Posterior cingulate gyrus (tissue), 11 donors: ENCODE measurements at regions of chr2 and their contacts with region 1.

Region 1: GRCh38 chr2:196783431-196784094 is 15.9 kb downstream of the GTF3C3 start:
- DNase-seq: peak in 1 of 10 donors; percentile 52

Region 2: GRCh38 chr2:196808083-196808665 is 24.6 kb after region 1 on chr2:
- intact Hi-C with region 1: loop called (anchors 1 kb)
- DNase-seq: no peak